ENCODE measurements at regions of chr12 and their contacts with region 1.

Region 1: GRCh38 chr12:57342207-57342691 is 88.6 kb downstream of the R3HDM2 start:
- DNase-seq: no peak
- CTCF ChIP-seq: no peak

Region 2: GRCh38 chr12:57165734-57166133 is 176.5 kb before region 1 on chr12:
- CTCF ChIA-PET with region 1: no interaction called
- POLR2A ChIA-PET with region 1: no interaction called
- DNase-seq: no peak
- CTCF ChIP-seq: no peak

Region 3: DNA sequence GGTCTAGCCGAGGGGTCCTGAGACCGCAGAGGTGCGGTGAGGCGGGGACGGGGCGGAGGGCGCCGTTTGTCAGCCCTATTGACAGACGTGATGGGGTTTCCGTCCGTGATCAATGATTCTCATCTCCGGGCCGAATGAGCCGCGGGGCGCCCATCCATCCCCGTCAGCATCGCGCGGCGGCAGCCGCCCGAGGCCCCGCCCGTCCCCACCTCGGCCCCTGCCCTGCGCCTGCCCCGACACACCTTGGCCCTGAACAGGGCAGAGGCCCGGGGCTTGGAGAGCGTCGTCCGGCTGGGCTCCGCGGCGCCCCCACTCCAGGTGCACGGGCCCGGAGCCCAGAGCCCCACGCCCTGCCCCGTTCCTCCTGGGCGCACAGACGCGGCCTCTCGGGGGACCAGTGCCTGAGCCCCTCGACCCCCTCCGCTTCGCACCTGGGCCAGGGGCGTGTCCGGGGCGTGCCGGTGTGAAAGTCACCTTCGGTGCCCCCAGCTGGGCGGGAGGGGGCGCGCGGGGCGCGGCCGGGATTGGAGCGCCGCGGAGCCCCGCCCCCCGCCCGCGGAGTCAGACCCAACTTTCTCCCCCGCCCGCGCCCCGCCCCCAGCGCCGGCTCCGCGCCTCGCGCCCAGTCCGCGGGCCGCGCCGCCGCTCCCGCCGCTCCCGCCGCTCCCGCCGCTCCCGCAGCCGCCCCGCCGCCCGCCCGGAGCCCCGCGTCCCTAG is 125.9 kb before region 1 on chr12 and contains the start of gene NXPH4:
- CTCF ChIA-PET with region 1: no interaction called
- POLR2A ChIA-PET with region 1: no interaction called
- DNase-seq: peak; percentile 75
- CTCF ChIP-seq: no peak

Region 4: DNA sequence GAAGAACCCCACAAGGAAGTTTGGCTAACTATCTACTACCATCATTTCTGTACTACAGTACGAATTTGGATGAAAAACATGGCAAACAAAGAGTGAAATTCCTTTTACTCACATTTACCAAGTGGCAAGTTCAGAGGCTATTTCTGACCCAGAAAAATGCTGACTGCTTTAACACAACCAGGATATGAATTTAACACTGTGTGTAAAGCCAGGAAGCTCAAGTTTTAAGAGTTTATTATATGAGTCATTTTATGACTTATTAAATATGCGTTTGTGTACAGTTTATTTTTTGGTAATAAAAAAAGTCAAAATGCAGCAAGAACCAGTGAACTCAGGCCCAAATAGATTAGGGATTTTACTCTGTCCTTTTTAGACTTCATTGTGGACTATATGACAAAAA is 32.8 kb before region 1 on chr12:
- CTCF ChIA-PET with region 1: interaction called, 11 read pairs
- POLR2A ChIA-PET with region 1: interaction called, 3 read pairs
- DNase-seq: no peak
- CTCF ChIP-seq: no peak